Caco-2 (cell line): ENCODE measurements at regions of chr5 and their contacts with region 1.

Region 1: DNA sequence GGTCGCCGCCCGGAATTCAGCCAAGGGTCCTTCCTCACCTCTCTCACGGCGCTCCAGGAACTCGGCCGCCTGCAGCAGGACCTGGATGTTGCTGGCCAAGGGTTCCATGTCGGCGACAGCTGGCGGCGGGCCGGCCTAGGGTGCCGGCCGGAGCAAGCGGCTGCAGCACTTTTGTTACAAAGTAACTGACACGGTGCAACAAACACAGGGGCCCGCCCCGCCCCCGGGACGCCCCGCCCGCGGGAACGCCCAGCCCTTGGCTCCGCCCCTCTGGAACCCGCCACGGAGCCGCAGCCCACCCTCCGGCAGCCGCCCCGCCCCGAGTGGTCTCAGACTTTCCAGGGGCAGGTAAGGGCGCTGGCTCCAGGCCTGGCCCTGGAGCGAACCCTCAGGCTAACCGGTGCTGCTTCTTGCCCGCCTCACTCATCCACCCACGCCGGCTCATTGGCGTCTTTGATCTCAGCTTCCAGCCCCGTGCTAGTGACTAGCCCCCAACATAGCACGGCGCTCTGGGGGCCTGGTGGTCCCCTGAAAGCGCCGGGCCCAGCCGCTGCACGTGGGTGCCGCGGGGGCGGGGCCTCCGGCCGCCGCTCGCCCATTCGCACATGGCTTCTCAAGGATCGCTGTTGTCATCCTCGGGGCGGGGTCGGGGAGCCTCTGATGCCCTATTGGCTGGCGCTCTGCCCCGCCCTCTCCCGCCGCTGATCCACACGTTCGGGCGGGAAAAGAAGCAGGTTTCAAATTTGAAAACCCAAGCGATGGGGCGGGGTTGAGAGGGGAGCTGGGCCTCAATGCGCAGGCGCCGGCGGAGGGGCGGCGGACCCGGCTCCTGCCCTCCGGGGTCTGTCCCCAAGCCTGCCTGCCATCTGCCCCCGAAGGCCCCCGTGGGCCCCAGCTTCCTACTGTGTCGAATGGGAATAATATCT is at the start of gene MXD3:
- DNase-seq: peak; percentile 99
- H3K4me3 ChIP-seq: peak within 1 kb of the TSS; percentile 93
- H3K4me3 Mint-ChIP-seq: peak within 1 kb of the TSS; percentile 82
- H3K27ac Mint-ChIP-seq: peak within 1 kb of the TSS; percentile 93
- H3K4me1 ChIP-seq: peaks cover 11% of the 10 kb centered on the region
- H3K4me1 Mint-ChIP-seq: peaks cover 13% of the 10 kb centered on the region
- H3K27me3 ChIP-seq: no peaks in the 10 kb centered on the region
- H3K27me3 Mint-ChIP-seq: no peaks in the 10 kb centered on the region
- CTCF ChIP-seq: no peak
- total RNA-seq, gene MXD3: 19.8 and 20.6 TPM in 2 replicates

Region 2: GRCh38 chr5:177325868-177326381 is 13.9 kb after region 1 on chr5:
- CTCF ChIA-PET with region 1: interaction called, 4 read pairs
- POLR2A ChIA-PET with region 1: no interaction called
- intact Hi-C with region 1: loop called (anchors 1 kb)
- DNase-seq: peak; percentile 46 to 70
- H3K4me3 ChIP-seq: no peak overlapping the region
- H3K4me3 Mint-ChIP-seq: peak overlapping the region; percentile 2
- H3K27ac Mint-ChIP-seq: peak overlapping the region; percentile 95
- H3K4me1 ChIP-seq: peaks cover 41% of the 10 kb centered on the region
- H3K4me1 Mint-ChIP-seq: peaks cover 33% of the 10 kb centered on the region
- H3K27me3 ChIP-seq: no peaks in the 10 kb centered on the region
- H3K27me3 Mint-ChIP-seq: no peaks in the 10 kb centered on the region
- CTCF ChIP-seq: no peak

Region 3: GRCh38 chr5:177362610-177363507 is 50.9 kb after region 1 on chr5:
- CTCF ChIA-PET with region 1: no interaction called
- POLR2A ChIA-PET with region 1: interaction called, 14 read pairs
- intact Hi-C with region 1: no loop called
- DNase-seq: peak; percentile 67 to 69
- H3K4me3 ChIP-seq: peak overlapping the region; percentile 60
- H3K4me3 Mint-ChIP-seq: peak overlapping the region; percentile 88
- H3K27ac Mint-ChIP-seq: peak overlapping the region; percentile 76
- H3K4me1 ChIP-seq: no peaks in the 10 kb centered on the region
- H3K4me1 Mint-ChIP-seq: peaks cover 9% of the 10 kb centered on the region
- H3K27me3 ChIP-seq: no peaks in the 10 kb centered on the region
- H3K27me3 Mint-ChIP-seq: no peaks in the 10 kb centered on the region
- CTCF ChIP-seq: no peak

Region 4: GRCh38 chr5:177403792-177404640 is 92.0 kb after region 1 on chr5:
- CTCF ChIA-PET with region 1: interaction called, 33 read pairs
- POLR2A ChIA-PET with region 1: interaction called, 3 read pairs
- intact Hi-C with region 1: no loop called
- DNase-seq: peak; percentile 87 to 89
- H3K4me3 ChIP-seq: peak overlapping the region; percentile 88
- H3K4me3 Mint-ChIP-seq: peak overlapping the region; percentile 93
- H3K27ac Mint-ChIP-seq: peak overlapping the region; percentile 59
- H3K4me1 ChIP-seq: peaks cover 6% of the 10 kb centered on the region
- H3K4me1 Mint-ChIP-seq: peaks cover 6% of the 10 kb centered on the region
- H3K27me3 ChIP-seq: no peaks in the 10 kb centered on the region
- H3K27me3 Mint-ChIP-seq: no peaks in the 10 kb centered on the region
- CTCF ChIP-seq: peak; percentile 65 to 86

Region 5: GRCh38 chr5:177497292-177498033 is 185.5 kb after region 1 on chr5 and contains the start of gene PDLIM7:
- CTCF ChIA-PET with region 1: interaction called, 9 read pairs
- POLR2A ChIA-PET with region 1: no interaction called
- intact Hi-C with region 1: loop called (anchors 2 kb)
- DNase-seq: peak; percentile 97 to 98
- H3K4me3 ChIP-seq: peak within 1 kb of the TSS; percentile 85
- H3K4me3 Mint-ChIP-seq: peak within 1 kb of the TSS; percentile 89
- H3K27ac Mint-ChIP-seq: peak within 1 kb of the TSS; percentile 63
- H3K4me1 ChIP-seq: peaks cover 25% of the 10 kb centered on the region
- H3K4me1 Mint-ChIP-seq: peaks cover 27% of the 10 kb centered on the region
- H3K27me3 ChIP-seq: no peaks in the 10 kb centered on the region
- H3K27me3 Mint-ChIP-seq: peaks cover 11% of the 10 kb centered on the region
- CTCF ChIP-seq: peak in 1 of 2 experiments; percentile 26
- total RNA-seq, gene PDLIM7: 49.1 and 56.8 TPM in 2 replicates

Region 6: GRCh38 chr5:177554474-177555111 is 242.6 kb after region 1 on chr5 and contains the start of gene FAM193B:
- CTCF ChIA-PET with region 1: no interaction called
- POLR2A ChIA-PET with region 1: no interaction called
- intact Hi-C with region 1: no loop called
- DNase-seq: peak; percentile 96 to 98
- H3K4me3 ChIP-seq: peak within 1 kb of the TSS; percentile 93
- H3K4me3 Mint-ChIP-seq: peak within 1 kb of the TSS; percentile 81
- H3K27ac Mint-ChIP-seq: peak within 1 kb of the TSS; percentile 78
- H3K4me1 ChIP-seq: peaks cover 23% of the 10 kb centered on the region
- H3K4me1 Mint-ChIP-seq: peaks cover 9% of the 10 kb centered on the region
- H3K27me3 ChIP-seq: no peaks in the 10 kb centered on the region
- H3K27me3 Mint-ChIP-seq: no peaks in the 10 kb centered on the region
- CTCF ChIP-seq: peak; percentile 28 to 47
- total RNA-seq, gene FAM193B: 72.9 and 82.7 TPM in 2 replicates